Posterior vena cava (tissue), 2 donors: ENCODE measurements at regions of chrX and their contacts with region 1.

Region 1: DNA sequence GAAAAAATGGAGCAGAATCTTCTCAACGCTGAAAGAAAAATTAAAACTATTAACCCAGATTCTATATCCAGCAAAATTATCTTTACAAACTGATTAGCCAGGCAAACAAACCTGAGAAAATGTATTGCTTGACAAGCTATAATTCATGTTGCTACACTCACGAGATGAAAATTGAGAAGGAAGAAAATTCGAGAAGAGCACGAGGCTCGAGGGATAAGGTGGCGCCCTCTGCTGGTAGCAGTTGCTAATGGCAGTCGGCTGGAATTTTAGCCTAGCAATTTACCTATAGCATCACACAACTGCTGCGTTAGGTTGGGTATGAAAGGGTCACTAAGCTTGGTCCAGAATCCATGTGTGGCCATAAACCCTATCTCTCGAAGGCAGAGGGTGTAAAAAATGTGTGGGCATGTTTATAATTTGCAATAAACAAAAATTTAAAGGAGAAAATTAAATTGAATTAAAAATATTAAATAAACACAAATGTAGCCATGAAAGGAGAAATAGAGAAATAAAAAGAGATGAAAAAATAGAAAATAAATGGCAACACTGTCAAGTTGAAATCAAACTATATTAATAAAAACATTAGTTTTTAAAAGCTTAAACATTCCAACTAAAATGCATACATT is 126.6 kb downstream of the PPP4R3C start:
- DNase-seq: no peak

Region 2: GRCh38 chrX:25755194-25755593 is 1581.4 kb before region 1 on chrX:
- intact Hi-C with region 1: loop called in 1 of 2 experiments (anchors 5 kb)
- DNase-seq: no peak

Region 3: GRCh38 chrX:26783512-26784225 is 552.9 kb before region 1 on chrX:
- intact Hi-C with region 1: no loop called
- DNase-seq: no peak

Region 4: DNA sequence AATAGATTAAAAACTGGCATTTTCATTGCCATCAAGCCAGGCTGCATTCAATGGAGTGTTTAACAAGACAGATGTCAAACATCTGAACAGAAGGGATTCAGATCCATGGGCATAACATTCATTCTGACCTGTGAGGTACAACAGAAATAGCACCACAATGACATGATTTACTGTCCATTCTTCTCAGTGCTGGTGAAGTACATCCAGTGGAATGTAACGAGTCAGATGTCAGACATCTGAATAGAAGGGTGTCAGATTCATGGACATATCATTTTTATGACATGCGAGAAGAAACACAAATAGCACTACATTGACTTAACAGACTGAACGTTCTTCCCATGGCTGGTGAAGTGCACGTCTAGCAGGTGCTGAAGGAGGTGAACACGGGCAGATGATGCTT is 59.8 kb before region 1 on chrX:
- intact Hi-C with region 1: no loop called
- DNase-seq: no peak

Region 5: DNA sequence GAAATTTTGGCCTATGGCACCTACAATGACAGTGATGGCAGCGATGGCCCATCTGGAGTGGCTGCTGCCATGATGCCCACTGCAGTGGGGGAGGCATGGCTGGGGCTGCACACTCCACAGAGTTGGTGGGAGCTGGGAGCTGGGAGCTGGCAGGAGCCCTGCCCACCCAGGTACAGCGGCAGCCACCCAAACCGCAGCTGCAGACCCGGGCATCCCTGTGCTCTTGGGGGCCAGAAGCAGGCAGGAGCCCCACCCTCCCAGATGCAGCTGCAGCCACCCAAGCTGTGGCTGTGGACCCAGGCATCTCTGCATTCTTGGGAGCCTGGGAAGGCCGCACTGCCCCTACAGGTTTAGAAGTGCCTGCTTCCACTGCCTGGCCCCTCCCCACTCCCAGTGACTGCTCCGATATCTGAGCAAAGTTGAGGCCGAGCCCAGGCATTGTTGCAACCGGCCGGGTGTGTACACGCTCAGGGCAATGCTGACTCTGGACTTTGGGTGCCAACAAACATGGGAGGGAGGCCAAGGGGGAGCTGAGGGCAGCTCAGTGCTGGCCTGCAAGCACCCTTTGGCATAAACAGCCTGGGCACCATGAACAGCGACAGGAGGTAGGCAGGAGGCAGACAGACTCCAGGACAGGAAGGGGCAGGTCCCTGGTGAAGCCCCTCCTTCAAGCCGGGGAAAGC is 43.7 kb after region 1 on chrX:
- intact Hi-C with region 1: no loop called
- DNase-seq: peak; percentile 64